ENCODE measurements at regions of chr1 and their contacts with region 1.

Region 1: GRCh38 chr1:183461350-183461749 is 10.9 kb upstream of the SMG7 start:
- DNase-seq: peak; percentile 68 to 93 (median 88)
- H3K4me3 ChIP-seq: peak overlapping the region in 1 of 3 experiments; percentile 47
- H3K4me3 Mint-ChIP-seq: peak overlapping the region in 1 of 2 donors; percentile 17
- H3K27ac ChIP-seq: peak overlapping the region; percentile 67 to 77
- H3K27ac Mint-ChIP-seq: peak overlapping the region; percentile 72 to 97 (median 95)
- H3K4me1 ChIP-seq: peaks cover 38 to 52% of the 10 kb centered on the region in 2 donors
- H3K4me1 Mint-ChIP-seq: peaks cover 40% of the 10 kb centered on the region
- H3K27me3 ChIP-seq: no peaks in the 10 kb centered on the region
- H3K27me3 Mint-ChIP-seq: peaks cover under 1 to 3% (median under 1%) of the 10 kb centered on the region in 3 donors
- CTCF ChIP-seq: no peak

Region 2: GRCh38 chr1:183368202-183369108 is 92.9 kb before region 1 on chr1:
- intact Hi-C with region 1: loop called in 1 of 2 experiments (anchors 10 kb)
- DNase-seq: peak in 1 of 3 donors; percentile 11
- H3K4me3 ChIP-seq: no peak overlapping the region
- H3K4me3 Mint-ChIP-seq: no peak overlapping the region
- H3K27ac ChIP-seq: no peak overlapping the region
- H3K27ac Mint-ChIP-seq: peak overlapping the region in 3 of 7 donors; percentile 6 to 21 (median 19)
- H3K4me1 ChIP-seq: peaks cover 20 to 23% of the 10 kb centered on the region in 2 donors
- H3K4me1 Mint-ChIP-seq: peaks cover 27% of the 10 kb centered on the region
- H3K27me3 ChIP-seq: peaks cover 0 to 6% of the 10 kb centered on the region in 2 donors
- H3K27me3 Mint-ChIP-seq: peaks cover 3 to 20% (median 15%) of the 10 kb centered on the region in 3 donors
- CTCF ChIP-seq: no peak

Region 3: DNA sequence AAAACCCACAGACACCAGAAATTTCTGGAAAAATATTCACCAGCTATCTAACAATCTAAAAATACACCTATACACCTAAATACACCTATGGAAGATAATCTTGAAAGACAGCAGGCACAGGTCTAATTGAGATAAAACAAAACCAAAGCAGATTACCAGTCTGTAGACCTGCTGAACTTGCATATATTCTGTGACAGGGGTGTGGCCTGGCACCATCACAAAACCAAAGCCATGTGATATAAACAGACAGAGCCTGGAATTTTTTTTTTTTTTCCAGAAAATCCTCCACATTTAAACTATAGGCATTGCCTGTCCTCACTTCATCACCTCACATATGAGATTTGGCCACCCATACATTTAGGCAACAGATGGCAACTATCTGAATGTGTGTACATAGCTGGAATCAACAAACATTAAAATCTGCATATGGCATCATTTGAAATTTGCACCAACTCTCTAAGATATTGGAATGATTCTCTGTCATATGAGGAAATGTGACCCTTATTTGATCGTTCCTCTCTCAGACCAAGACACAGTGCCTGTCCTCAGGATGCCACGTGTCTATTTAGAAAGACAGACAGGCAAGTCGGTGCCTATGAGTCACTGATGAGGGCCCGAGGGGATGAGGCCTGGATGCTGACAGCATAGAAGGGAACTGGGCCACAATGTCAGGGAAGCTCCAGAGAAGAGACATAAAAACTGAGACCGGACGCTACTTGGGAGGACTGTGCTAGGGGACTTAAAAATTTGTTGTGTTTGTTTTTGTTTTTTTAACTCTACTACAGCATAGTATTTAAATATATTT is 75.8 kb before region 1 on chr1:
- intact Hi-C with region 1: no loop called
- DNase-seq: no peak
- H3K4me3 ChIP-seq: no peak overlapping the region
- H3K4me3 Mint-ChIP-seq: no peak overlapping the region
- H3K27ac ChIP-seq: no peak overlapping the region
- H3K27ac Mint-ChIP-seq: no peak overlapping the region
- H3K4me1 ChIP-seq: no peaks in the 10 kb centered on the region
- H3K4me1 Mint-ChIP-seq: peaks cover 5% of the 10 kb centered on the region
- H3K27me3 ChIP-seq: peaks cover 7 to 9% of the 10 kb centered on the region in 2 donors
- H3K27me3 Mint-ChIP-seq: peaks cover 12 to 20% (median 19%) of the 10 kb centered on the region in 3 donors
- CTCF ChIP-seq: no peak

Region 4: GRCh38 chr1:183493548-183494246 is 32.3 kb after region 1 on chr1:
- intact Hi-C with region 1: no loop called
- DNase-seq: no peak
- H3K4me3 ChIP-seq: no peak overlapping the region
- H3K4me3 Mint-ChIP-seq: peak overlapping the region in 1 of 2 donors; percentile 4
- H3K27ac ChIP-seq: peak overlapping the region in 1 of 2 donors; percentile 52
- H3K27ac Mint-ChIP-seq: peak overlapping the region; percentile 12 to 77 (median 40)
- H3K4me1 ChIP-seq: peaks cover 0 to 7% of the 10 kb centered on the region in 2 donors
- H3K4me1 Mint-ChIP-seq: peaks cover 19% of the 10 kb centered on the region
- H3K27me3 ChIP-seq: no peaks in the 10 kb centered on the region
- H3K27me3 Mint-ChIP-seq: no peaks in the 10 kb centered on the region
- CTCF ChIP-seq: no peak

Region 5: GRCh38 chr1:183537405-183537804 is 76.1 kb after region 1 on chr1:
- intact Hi-C with region 1: no loop called
- DNase-seq: no peak
- H3K4me3 ChIP-seq: no peak overlapping the region
- H3K4me3 Mint-ChIP-seq: no peak overlapping the region
- H3K27ac ChIP-seq: no peak overlapping the region
- H3K27ac Mint-ChIP-seq: peak overlapping the region in 1 of 7 donors; percentile 63
- H3K4me1 ChIP-seq: no peaks in the 10 kb centered on the region
- H3K4me1 Mint-ChIP-seq: no peaks in the 10 kb centered on the region
- H3K27me3 ChIP-seq: no peaks in the 10 kb centered on the region
- H3K27me3 Mint-ChIP-seq: no peaks in the 10 kb centered on the region
- CTCF ChIP-seq: no peak

Measured in CD14-positive monocyte (primary cell).